ENCODE measurements at regions of chr18 and their contacts with region 1.

Region 1: DNA sequence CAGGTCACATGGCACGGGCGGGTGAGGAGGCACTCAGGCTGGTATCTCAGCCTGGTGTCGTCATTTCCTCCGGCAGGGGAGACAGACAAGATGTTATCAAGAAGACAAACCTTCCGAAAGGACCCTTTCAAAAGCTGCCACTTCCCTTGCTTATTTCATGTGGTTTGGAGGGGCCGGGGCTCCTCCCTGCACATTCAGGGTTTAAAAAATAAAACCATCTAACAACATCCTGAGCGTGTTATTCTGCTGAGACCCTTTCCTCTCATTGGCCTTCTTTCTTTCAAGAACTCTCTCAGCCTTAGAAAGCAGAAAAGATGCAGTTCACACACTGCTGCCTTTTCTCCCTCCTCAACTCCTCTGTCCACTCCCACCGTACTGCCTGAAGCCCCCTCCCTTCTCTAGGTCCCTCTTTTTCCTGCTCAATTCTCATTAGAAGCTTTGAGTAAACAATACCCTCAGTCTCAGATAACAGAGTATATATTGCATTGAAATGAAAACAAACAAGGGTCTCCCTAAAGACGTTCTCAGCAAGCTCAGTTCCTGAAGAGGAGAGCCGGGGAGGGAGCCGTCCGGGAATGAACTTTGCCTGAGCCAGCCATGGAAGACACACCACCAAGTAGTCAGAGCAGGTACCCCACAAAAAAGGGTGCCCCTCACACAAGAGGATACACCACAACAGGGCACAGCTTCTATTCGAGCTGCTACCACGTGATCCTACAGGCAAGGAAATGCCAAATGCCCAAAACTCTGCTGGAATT is 9.7 kb downstream of the SMAD7 start:
- DNase-seq: peak; percentile 58
- H3K4me3 ChIP-seq: no peak overlapping the region
- H3K27ac ChIP-seq: peak overlapping the region; percentile 26
- H3K4me1 ChIP-seq: peaks cover 56% of the 10 kb centered on the region
- H3K27me3 ChIP-seq: no peaks in the 10 kb centered on the region
- CTCF ChIP-seq: no peak
- POLR2A ChIP-seq: peak; percentile 23

Region 2: GRCh38 chr18:48913201-48913600 is 27.8 kb before region 1 on chr18:
- CTCF ChIA-PET with region 1: no interaction called
- POLR2A ChIA-PET with region 1: no interaction called
- dilution Hi-C with region 1: no loop called
- intact Hi-C with region 1: no loop called
- DNase-seq: no peak
- H3K4me3 ChIP-seq: no peak overlapping the region
- H3K27ac ChIP-seq: no peak overlapping the region
- H3K4me1 ChIP-seq: no peaks in the 10 kb centered on the region
- H3K27me3 ChIP-seq: no peaks in the 10 kb centered on the region
- CTCF ChIP-seq: no peak
- POLR2A ChIP-seq: no peak

Region 3: GRCh38 chr18:48928787-48929186 is 12.2 kb before region 1 on chr18:
- CTCF ChIA-PET with region 1: interaction called, 8 read pairs
- POLR2A ChIA-PET with region 1: no interaction called
- dilution Hi-C with region 1: no loop called
- intact Hi-C with region 1: loop called (anchors 1 kb)
- DNase-seq: peak; percentile 83
- H3K4me3 ChIP-seq: no peak overlapping the region
- H3K27ac ChIP-seq: peak overlapping the region; percentile 86
- H3K4me1 ChIP-seq: peaks cover 81% of the 10 kb centered on the region
- H3K27me3 ChIP-seq: no peaks in the 10 kb centered on the region
- CTCF ChIP-seq: no peak
- POLR2A ChIP-seq: peak; percentile 58